ENCODE measurements at regions of chr1 and their contacts with region 1.

Region 1: GRCh38 chr1:150552093-150552691 is 3.0 kb downstream of the ADAMTSL4 start:
- DNase-seq: peak; percentile 81
- H3K4me3 ChIP-seq: no peak overlapping the region
- H3K27ac ChIP-seq: peak overlapping the region; percentile 60 to 74
- H3K4me1 ChIP-seq: peaks cover 39% of the 10 kb centered on the region
- H3K27me3 ChIP-seq: no peaks in the 10 kb centered on the region
- CTCF ChIP-seq: no peak
- POLR2A ChIP-seq: no peak

Region 2: DNA sequence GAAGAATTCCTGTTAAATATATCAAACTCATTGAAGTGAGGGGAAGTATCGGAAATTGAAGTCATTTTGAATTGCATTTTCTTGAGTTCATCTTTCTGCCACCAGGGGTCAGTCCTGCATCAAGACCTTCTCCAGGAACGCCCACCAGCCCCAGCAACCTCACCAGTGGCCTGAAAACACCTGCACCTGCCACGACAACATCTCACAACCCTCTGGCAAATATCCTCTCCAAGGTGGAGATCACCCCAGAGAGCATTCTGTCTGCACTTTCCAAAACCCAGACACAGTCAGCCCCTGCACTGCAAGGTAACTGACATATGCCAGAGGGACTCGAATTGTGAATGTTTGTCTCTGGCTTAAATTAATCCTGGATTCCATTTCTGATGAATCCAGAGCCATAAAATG is 87.8 kb before region 1 on chr1:
- intact Hi-C with region 1: loop called (anchors 10 kb)
- DNase-seq: peak; percentile 57
- H3K4me3 ChIP-seq: no peak overlapping the region
- H3K27ac ChIP-seq: no peak overlapping the region
- H3K4me1 ChIP-seq: no peaks in the 10 kb centered on the region
- H3K27me3 ChIP-seq: no peaks in the 10 kb centered on the region
- CTCF ChIP-seq: peak; percentile 58 to 83 (median 81)
- POLR2A ChIP-seq: no peak

Region 3: DNA sequence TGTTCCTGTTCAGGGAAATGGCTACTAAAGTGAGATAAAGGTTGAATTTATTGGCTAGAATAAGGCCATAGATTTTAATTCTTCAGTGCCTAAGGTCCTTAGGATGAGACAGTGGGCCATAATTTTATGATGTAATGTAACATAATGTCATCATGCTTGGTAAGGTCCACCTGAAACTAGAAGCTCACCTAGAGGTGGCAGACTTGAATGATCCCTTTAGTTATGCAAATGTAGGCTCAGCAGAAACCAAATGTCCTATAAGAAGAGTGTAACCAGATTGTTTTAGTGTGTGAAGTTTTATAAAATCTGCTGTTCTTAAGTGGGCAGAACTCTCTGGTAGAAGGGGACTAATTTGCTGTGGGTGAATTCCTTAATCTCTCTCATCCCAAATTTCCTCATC is 360.4 kb after region 1 on chr1:
- intact Hi-C with region 1: no loop called
- DNase-seq: no peak
- H3K4me3 ChIP-seq: no peak overlapping the region
- H3K27ac ChIP-seq: no peak overlapping the region
- H3K4me1 ChIP-seq: no peaks in the 10 kb centered on the region
- H3K27me3 ChIP-seq: no peaks in the 10 kb centered on the region
- CTCF ChIP-seq: no peak
- POLR2A ChIP-seq: no peak

Measured in testis (tissue), 5 donors.